ENCODE measurements at regions of chr7 and their contacts with region 1.

Region 1: GRCh38 chr7:103735377-103735776 is 254.1 kb downstream of the RELN start:
- DNase-seq: no peak
- ATAC-seq: no peak
- H3K4me3 ChIP-seq: no peak overlapping the region
- H3K27ac ChIP-seq: no peak overlapping the region
- H3K4me1 ChIP-seq: no peaks in the 10 kb centered on the region
- H3K27me3 ChIP-seq: 0 out of 2 replicates have a peak, but pooled peaks cover 4% of the 10 kb centered on the region
- CTCF ChIP-seq: no peak

Region 2: DNA sequence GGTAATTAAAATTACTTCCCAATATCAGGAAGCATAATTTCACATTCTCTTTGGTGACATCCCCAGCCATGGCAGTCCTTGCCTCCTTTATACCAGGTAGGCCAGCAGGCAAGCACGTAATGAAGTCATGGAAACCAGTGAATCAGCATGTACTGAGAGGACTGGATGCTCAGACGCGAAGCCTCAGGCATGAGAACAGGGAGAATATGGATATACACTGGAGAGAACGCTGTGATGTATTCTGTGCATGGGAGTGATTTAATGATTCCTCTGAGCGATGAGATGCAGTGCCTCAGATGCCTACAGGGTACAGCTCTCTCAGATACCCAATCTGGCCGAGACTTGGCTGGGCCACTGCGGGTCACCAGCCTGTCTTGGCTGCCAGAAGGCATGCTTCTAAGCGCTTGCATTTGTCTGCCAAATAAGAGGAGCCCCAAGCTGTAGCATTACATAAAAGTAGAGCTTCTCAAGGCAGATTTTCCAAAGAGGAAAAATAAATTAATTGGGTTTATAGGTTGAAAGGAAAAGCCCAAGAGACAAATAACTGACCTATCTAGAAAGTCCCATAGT is 16.0 kb after region 1 on chr7:
- CTCF ChIA-PET with region 1: no interaction called
- POLR2A ChIA-PET with region 1: interaction called, 16 read pairs
- in situ Hi-C with region 1: no loop called
- intact Hi-C with region 1: no loop called
- DNase-seq: no peak
- ATAC-seq: no peak
- H3K4me3 ChIP-seq: no peak overlapping the region
- H3K27ac ChIP-seq: no peak overlapping the region
- H3K4me1 ChIP-seq: no peaks in the 10 kb centered on the region
- H3K27me3 ChIP-seq: no peaks in the 10 kb centered on the region
- CTCF ChIP-seq: no peak

Region 3: DNA sequence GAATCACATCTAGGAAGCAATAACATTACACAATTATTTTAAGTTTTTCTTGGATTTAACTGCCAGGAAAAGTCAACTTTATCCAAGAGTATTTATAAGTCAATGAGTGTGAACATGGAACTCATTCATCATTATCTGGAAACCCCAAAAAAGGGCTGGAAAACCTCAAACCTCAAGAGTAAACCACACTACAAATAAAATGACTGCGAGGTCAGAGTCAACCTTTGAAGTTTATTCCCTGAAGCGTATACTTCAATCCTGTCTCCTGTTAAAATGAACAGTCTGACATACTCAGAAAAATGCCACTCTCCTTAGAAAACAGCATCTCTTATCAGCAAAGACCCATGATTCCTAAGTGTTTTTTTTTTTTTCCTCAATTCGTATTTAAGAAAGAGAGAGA is 167.5 kb after region 1 on chr7:
- CTCF ChIA-PET with region 1: no interaction called
- POLR2A ChIA-PET with region 1: no interaction called
- in situ Hi-C with region 1: no loop called
- intact Hi-C with region 1: no loop called
- DNase-seq: no peak
- ATAC-seq: no peak
- H3K4me3 ChIP-seq: no peak overlapping the region
- H3K27ac ChIP-seq: no peak overlapping the region
- H3K4me1 ChIP-seq: no peaks in the 10 kb centered on the region
- H3K27me3 ChIP-seq: no peaks in the 10 kb centered on the region
- CTCF ChIP-seq: no peak

Region 4: GRCh38 chr7:103934508-103934907 is 199.1 kb after region 1 on chr7:
- CTCF ChIA-PET with region 1: no interaction called
- POLR2A ChIA-PET with region 1: no interaction called
- in situ Hi-C with region 1: no loop called
- intact Hi-C with region 1: no loop called
- DNase-seq: no peak
- ATAC-seq: no peak
- H3K4me3 ChIP-seq: no peak overlapping the region
- H3K27ac ChIP-seq: no peak overlapping the region
- H3K4me1 ChIP-seq: no peaks in the 10 kb centered on the region
- H3K27me3 ChIP-seq: no peaks in the 10 kb centered on the region
- CTCF ChIP-seq: no peak

Measured in Panc1 (cell line).